Ascending aorta (tissue), 2 donors: ENCODE measurements at regions of chr9 and their contacts with region 1.

Region 1: DNA sequence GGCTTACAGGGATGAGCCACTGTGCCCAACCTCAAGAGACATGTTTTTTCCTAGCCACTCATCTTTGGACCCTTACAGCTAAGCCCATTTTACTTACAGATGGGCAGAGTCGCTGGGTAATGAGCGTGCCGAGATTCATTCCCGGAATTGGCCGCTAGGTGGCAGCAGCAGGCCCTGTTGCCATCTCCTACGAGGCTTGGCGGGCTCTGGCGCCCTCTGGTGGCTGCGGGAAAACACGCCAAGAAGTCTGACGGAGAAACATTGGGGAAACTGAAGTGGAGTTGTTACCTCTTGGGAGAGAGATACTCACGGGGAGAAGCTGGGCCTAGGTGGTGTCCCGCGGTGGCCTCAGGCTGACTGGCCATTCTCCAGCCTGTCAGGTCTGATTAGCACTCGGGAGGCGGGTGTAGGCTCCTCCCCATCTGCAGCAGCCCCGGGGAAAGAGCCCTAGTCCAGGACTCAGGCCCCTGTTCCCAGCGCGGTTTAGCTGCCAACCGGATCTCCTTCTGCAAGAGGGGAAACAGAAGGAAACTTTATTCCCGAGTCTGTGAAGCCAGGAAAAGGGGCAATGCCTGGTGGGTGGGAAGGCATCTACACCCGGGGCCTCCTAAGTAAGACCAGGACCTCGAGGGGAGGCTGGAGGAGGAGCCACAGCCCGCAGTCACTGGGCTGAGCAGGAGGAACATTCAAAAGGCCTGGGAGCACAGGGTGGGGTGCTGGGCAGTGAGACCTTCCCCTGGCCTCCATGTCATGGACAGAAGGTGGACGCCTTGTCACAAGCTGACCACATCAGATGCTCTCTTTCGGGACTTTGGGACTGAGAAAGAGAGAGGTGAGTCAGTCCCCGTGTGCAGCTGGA is 9.7 kb downstream of the PTGES2 start:
- DNase-seq: peak; percentile 61 to 94
- H3K4me3 ChIP-seq: peak overlapping the region in 1 of 2 donors; percentile 16
- H3K27ac ChIP-seq: no peak overlapping the region
- H3K4me1 ChIP-seq: peaks cover 0 to 4% of the 10 kb centered on the region in 2 donors
- H3K27me3 ChIP-seq: no peaks in the 10 kb centered on the region
- CTCF ChIP-seq: peak; percentile 100

Region 2: GRCh38 chr9:128034821-128035764 is 82.7 kb before region 1 on chr9:
- intact Hi-C with region 1: loop called (anchors 5 kb)
- DNase-seq: peak in 1 of 2 donors; percentile 81
- H3K4me3 ChIP-seq: no peak overlapping the region
- H3K27ac ChIP-seq: no peak overlapping the region
- H3K4me1 ChIP-seq: no peaks in the 10 kb centered on the region
- H3K27me3 ChIP-seq: no peaks in the 10 kb centered on the region
- CTCF ChIP-seq: peak; percentile 86 to 92 (median 89)

Region 3: DNA sequence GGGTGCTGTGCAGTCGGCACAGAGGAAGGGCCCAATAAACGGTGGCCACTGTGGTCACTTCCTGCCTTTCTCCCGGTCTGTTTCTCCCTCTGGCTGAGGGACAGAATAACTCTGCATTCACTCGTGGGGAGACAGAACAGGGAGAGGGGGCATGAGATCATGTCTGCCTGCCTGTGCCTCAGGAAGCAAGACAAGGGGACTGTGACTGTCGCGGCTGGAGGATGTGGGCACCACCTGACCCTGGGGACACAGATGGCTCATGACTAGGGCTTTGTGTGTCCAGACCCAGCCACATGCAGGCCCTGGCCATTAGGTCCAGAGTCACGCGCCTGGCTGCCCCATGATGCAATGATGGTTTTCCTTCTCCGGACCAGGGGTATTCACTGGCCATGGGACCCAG is 198.6 kb after region 1 on chr9:
- intact Hi-C with region 1: no loop called
- DNase-seq: no peak
- H3K4me3 ChIP-seq: no peak overlapping the region
- H3K27ac ChIP-seq: no peak overlapping the region
- H3K4me1 ChIP-seq: peaks cover 1 to 4% of the 10 kb centered on the region in 2 donors
- H3K27me3 ChIP-seq: no peaks in the 10 kb centered on the region
- CTCF ChIP-seq: no peak